Calu3 (cell line): ENCODE measurements at regions of chr6 and their contacts with region 1.

Region 1: GRCh38 chr6:89242574-89243330 is 25.6 kb upstream of the GABRR1 start:
- DNase-seq: peak; percentile 21
- H3K4me3 Mint-ChIP-seq: no peak overlapping the region
- H3K27ac Mint-ChIP-seq: no peak overlapping the region
- H3K4me1 Mint-ChIP-seq: peaks cover 17% of the 10 kb centered on the region
- H3K27me3 Mint-ChIP-seq: no peaks in the 10 kb centered on the region
- CTCF ChIP-seq: peak; percentile 31

Region 2: DNA sequence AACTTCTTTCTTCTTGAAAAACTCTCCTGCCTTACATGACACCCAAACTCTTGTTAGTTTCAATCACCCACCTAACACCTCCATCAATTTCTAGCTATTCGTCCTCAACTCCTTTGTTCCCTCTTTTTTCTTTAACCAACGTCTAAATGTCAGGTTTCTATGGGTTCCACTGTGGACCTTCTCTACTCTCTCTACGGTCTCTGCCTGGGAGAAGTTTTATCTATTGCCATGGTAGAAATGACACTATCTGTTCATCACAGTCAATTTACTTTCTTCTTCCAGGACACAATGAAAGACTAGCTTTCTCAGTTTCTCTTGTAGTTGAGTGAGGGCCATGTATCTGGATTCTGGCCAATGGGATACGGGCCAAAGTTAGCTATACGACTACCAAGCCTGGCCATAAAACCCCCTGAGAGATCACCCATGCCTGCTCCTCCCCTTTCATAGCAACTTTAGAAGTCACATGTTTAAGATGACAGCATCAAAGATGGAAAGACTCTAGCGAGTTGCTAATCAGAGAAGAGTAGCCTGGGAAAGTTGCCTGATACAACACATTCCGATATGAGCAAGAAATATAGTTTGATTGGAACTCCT is 297.2 kb before region 1 on chr6:
- CTCF ChIA-PET with region 1: no interaction called
- intact Hi-C with region 1: no loop called
- DNase-seq: no peak
- H3K4me3 Mint-ChIP-seq: no peak overlapping the region
- H3K27ac Mint-ChIP-seq: no peak overlapping the region
- H3K4me1 Mint-ChIP-seq: no peaks in the 10 kb centered on the region
- H3K27me3 Mint-ChIP-seq: no peaks in the 10 kb centered on the region
- CTCF ChIP-seq: no peak

Region 3: DNA sequence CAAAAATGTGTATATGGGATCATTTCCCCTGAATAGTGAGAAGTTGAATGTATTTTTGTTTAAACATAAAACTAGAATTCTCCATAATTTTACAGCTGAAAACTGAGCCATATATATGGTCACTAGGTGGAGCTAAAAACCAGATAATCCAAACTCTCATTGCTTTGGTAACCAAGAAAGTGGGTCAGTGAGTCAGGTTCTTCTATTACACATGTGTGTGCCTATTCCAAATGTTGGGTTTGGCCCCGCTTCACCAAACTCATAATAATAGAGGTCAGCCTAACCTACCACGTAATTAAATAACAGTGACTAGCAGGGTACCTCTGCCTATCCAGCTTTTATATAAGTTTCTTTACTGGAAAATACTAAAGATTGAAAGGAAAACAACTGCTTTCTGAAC is 260.0 kb before region 1 on chr6:
- CTCF ChIA-PET with region 1: interaction called, 11 read pairs
- intact Hi-C with region 1: loop called (anchors 1 kb)
- DNase-seq: no peak
- H3K4me3 Mint-ChIP-seq: no peak overlapping the region
- H3K27ac Mint-ChIP-seq: no peak overlapping the region
- H3K4me1 Mint-ChIP-seq: peaks cover 14% of the 10 kb centered on the region
- H3K27me3 Mint-ChIP-seq: no peaks in the 10 kb centered on the region
- CTCF ChIP-seq: no peak